ENCODE measurements at regions of chr1 and their contacts with region 1.

Region 1: GRCh38 chr1:31955917-31956736 is 18.0 kb upstream of the PTP4A2 start:
- DNase-seq: peak; percentile 54 to 83
- ATAC-seq: peak; percentile 1 to 74 (median 64)
- H3K4me3 ChIP-seq: peak overlapping the region in 1 of 10 donors; percentile 11
- H3K27ac ChIP-seq: peak overlapping the region; percentile 85 to 96 (median 94)
- H3K4me1 ChIP-seq: peaks cover 13 to 90% (median 37%) of the 10 kb centered on the region in 9 donors
- H3K27me3 ChIP-seq: no peaks in the 10 kb centered on the region
- CTCF ChIP-seq: peak in 5 of 9 donors; percentile 11 to 53 (median 44)

Region 2: GRCh38 chr1:31259746-31260145 is 696.4 kb before region 1 on chr1:
- intact Hi-C with region 1: no loop called
- DNase-seq: no peak
- ATAC-seq: no peak
- H3K4me3 ChIP-seq: no peak overlapping the region
- H3K27ac ChIP-seq: no peak overlapping the region
- H3K4me1 ChIP-seq: peaks cover 0 to 6% (median 0%) of the 10 kb centered on the region in 9 donors
- H3K27me3 ChIP-seq: no peaks in the 10 kb centered on the region
- CTCF ChIP-seq: no peak

Region 3: GRCh38 chr1:31789259-31790065 is 166.7 kb before region 1 on chr1:
- intact Hi-C with region 1: loop called in 5 of 10 experiments (anchors 5 to 10 kb)
- DNase-seq: peak; percentile 95 to 97
- ATAC-seq: peak; percentile 86 to 95 (median 92)
- H3K4me3 ChIP-seq: peak overlapping the region; percentile 41 to 93 (median 66)
- H3K27ac ChIP-seq: peak overlapping the region in 6 of 10 donors; percentile 58 to 90 (median 82)
- H3K4me1 ChIP-seq: peaks cover 0 to 18% (median 8%) of the 10 kb centered on the region in 9 donors
- H3K27me3 ChIP-seq: peaks cover 0 to 9% (median 0%) of the 10 kb centered on the region in 7 donors
- CTCF ChIP-seq: peak; percentile 81 to 89 (median 87)

Region 4: GRCh38 chr1:31815752-31816500 is 140.2 kb before region 1 on chr1 and contains the start of gene SPOCD1:
- intact Hi-C with region 1: loop called in 1 of 10 experiments (anchors 10 kb)
- DNase-seq: peak; percentile 58 to 69
- ATAC-seq: peak; percentile 48 to 82 (median 67)
- H3K4me3 ChIP-seq: no peak within 1 kb of the TSS
- H3K27ac ChIP-seq: no peak within 1 kb of the TSS
- H3K4me1 ChIP-seq: peaks cover 0 to 14% (median 0%) of the 10 kb centered on the region in 9 donors
- H3K27me3 ChIP-seq: no peaks in the 10 kb centered on the region
- CTCF ChIP-seq: peak; percentile 17 to 71 (median 52)
- total RNA-seq, gene SPOCD1: 0.12 to 1.2 (median 0.65) TPM in 3 of 10 donors, not detected in the others

Region 5: GRCh38 chr1:31910933-31911332 is 45.2 kb before region 1 on chr1:
- intact Hi-C with region 1: loop called in 1 of 10 experiments (anchors 10 kb)
- DNase-seq: no peak
- ATAC-seq: peak in 1 of 8 donors; percentile 60
- H3K4me3 ChIP-seq: no peak overlapping the region
- H3K27ac ChIP-seq: no peak overlapping the region
- H3K4me1 ChIP-seq: peaks cover 0 to 55% (median 15%) of the 10 kb centered on the region in 9 donors
- H3K27me3 ChIP-seq: no peaks in the 10 kb centered on the region
- CTCF ChIP-seq: no peak

Region 6: DNA sequence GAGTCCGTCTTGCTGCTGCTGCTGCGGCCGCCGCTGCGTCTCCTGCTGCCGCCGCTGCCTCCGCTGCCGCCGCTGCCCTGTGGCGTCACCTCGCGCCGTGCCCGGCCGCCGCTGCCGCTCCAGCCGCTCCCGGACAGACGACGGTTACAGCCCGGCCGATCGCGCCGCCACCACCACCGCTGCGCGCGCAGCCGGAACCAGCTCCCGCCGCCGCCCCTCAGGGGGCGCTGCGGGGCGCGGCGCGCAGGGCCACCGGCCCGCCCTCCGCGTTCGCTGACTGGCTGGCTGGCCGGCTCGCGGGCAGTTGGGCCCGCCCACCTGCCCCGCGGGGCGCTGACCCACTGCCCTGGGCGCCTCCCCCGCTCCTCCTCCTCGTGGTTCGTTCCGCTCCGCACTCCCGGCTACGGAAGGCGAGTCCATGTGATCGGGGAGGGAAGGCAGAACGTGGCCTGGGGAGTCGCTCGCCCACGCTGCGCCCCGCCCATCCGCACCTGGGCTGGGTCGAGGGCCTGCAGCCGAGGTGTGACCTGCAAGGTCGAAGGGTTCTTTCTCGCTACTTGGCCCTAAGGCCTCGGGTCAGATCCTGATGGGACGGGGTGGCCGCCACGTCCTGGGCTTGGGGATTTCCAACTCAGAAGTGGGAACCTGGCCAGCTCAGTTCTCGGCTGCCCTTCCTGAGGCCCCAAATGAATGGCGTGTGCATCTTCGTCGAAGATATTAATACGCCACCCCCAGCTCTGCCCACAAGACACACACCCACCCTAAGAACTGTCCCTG is 17.8 kb before region 1 on chr1 and contains the start of gene PTP4A2:
- intact Hi-C with region 1: loop called in 1 of 10 experiments (anchors 2 kb)
- DNase-seq: peak; percentile 94 to 95
- ATAC-seq: peak; percentile 92 to 97 (median 96)
- H3K4me3 ChIP-seq: peak within 1 kb of the TSS; percentile 45 to 75 (median 68)
- H3K27ac ChIP-seq: peak within 1 kb of the TSS; percentile 69 to 97 (median 94)
- H3K4me1 ChIP-seq: peaks cover 19 to 85% (median 49%) of the 10 kb centered on the region in 9 donors
- H3K27me3 ChIP-seq: no peaks in the 10 kb centered on the region
- CTCF ChIP-seq: peak in 7 of 9 donors; percentile 30 to 87 (median 59)
- total RNA-seq, gene PTP4A2: 206 to 506 (median 236) TPM

Measured in heart right ventricle (tissue), 16 donors.